CD4-positive, alpha-beta memory T cell (primary cell): ENCODE measurements at regions of chr11 and their contacts with region 1.

Region 1: GRCh38 chr11:4072668-4073285 is 21.8 kb upstream of the RRM1 start:
- DNase-seq: peak; percentile 64 to 77 (median 76)
- H3K4me3 ChIP-seq: no peak overlapping the region
- H3K4me3 Mint-ChIP-seq: no peak overlapping the region
- H3K27ac ChIP-seq: peak overlapping the region; percentile 17
- H3K27ac Mint-ChIP-seq: peak overlapping the region; percentile 33 to 92 (median 88)
- H3K4me1 ChIP-seq: peaks cover 39% of the 10 kb centered on the region
- H3K4me1 Mint-ChIP-seq: peaks cover 40 to 63% (median 49%) of the 10 kb centered on the region in 4 donors
- H3K27me3 ChIP-seq: no peaks in the 10 kb centered on the region
- H3K27me3 Mint-ChIP-seq: no peaks in the 10 kb centered on the region

Region 2: GRCh38 chr11:3781423-3781822 is 291.4 kb before region 1 on chr11:
- CTCF ChIA-PET with region 1: interaction called, 24 read pairs
- POLR2A ChIA-PET with region 1: no interaction called
- intact Hi-C with region 1: no loop called
- DNase-seq: no peak
- H3K4me3 ChIP-seq: no peak overlapping the region
- H3K4me3 Mint-ChIP-seq: no peak overlapping the region
- H3K27ac ChIP-seq: no peak overlapping the region
- H3K27ac Mint-ChIP-seq: peak overlapping the region in 4 of 7 donors; percentile 41 to 81 (median 66)
- H3K4me1 ChIP-seq: peaks cover 47% of the 10 kb centered on the region
- H3K4me1 Mint-ChIP-seq: peaks cover 27 to 48% (median 37%) of the 10 kb centered on the region in 4 donors
- H3K27me3 ChIP-seq: no peaks in the 10 kb centered on the region
- H3K27me3 Mint-ChIP-seq: no peaks in the 10 kb centered on the region

Region 3: GRCh38 chr11:3817181-3817800 is 255.5 kb before region 1 on chr11:
- CTCF ChIA-PET with region 1: interaction called, 41 read pairs
- POLR2A ChIA-PET with region 1: no interaction called
- intact Hi-C with region 1: no loop called
- DNase-seq: no peak
- H3K4me3 ChIP-seq: no peak overlapping the region
- H3K4me3 Mint-ChIP-seq: no peak overlapping the region
- H3K27ac ChIP-seq: no peak overlapping the region
- H3K27ac Mint-ChIP-seq: peak overlapping the region in 1 of 7 donors; percentile 31
- H3K4me1 ChIP-seq: no peaks in the 10 kb centered on the region
- H3K4me1 Mint-ChIP-seq: no peaks in the 10 kb centered on the region
- H3K27me3 ChIP-seq: no peaks in the 10 kb centered on the region
- H3K27me3 Mint-ChIP-seq: no peaks in the 10 kb centered on the region

Region 4: DNA sequence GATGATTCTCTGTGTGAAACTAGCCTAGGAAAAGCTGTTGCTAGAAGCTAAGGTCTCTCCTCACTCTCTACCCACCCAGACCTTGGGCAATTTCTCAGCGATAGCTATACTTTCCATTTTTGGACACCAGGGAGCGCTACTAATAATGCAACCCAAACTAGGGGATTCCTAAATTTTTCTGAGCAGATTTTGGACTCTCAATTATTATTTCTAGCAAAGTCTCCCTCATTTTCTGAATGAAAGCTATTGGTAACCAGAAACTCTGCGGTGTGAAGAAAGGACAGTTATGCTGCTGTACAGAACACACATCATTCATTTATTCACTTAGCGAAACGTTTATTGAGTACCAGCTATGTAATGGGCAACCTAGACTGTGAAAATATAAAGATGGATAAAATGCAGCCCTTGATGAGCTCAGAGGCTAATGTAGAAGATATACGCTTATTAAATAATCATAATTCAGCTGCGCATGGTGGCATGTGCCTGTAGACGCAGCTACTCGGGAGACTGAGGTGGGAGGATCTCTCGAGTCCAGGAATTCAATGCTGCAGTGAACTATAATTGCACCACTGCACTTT is 223.4 kb before region 1 on chr11:
- CTCF ChIA-PET with region 1: interaction called, 934 read pairs
- POLR2A ChIA-PET with region 1: interaction called, 89 read pairs
- intact Hi-C with region 1: loop called (anchors 1 kb)
- DNase-seq: peak; percentile 57 to 70 (median 66)
- H3K4me3 ChIP-seq: no peak overlapping the region
- H3K4me3 Mint-ChIP-seq: peak overlapping the region in 1 of 8 donors; percentile 21
- H3K27ac ChIP-seq: no peak overlapping the region
- H3K27ac Mint-ChIP-seq: peak overlapping the region; percentile 4 to 76 (median 62)
- H3K4me1 ChIP-seq: peaks cover 30% of the 10 kb centered on the region
- H3K4me1 Mint-ChIP-seq: peaks cover 25 to 38% (median 30%) of the 10 kb centered on the region in 4 donors
- H3K27me3 ChIP-seq: no peaks in the 10 kb centered on the region
- H3K27me3 Mint-ChIP-seq: no peaks in the 10 kb centered on the region

Region 5: GRCh38 chr11:3929649-3930048 is 143.1 kb before region 1 on chr11:
- CTCF ChIA-PET with region 1: interaction called, 23 read pairs
- POLR2A ChIA-PET with region 1: no interaction called
- intact Hi-C with region 1: loop called (anchors 1 kb)
- DNase-seq: no peak
- H3K4me3 ChIP-seq: no peak overlapping the region
- H3K4me3 Mint-ChIP-seq: no peak overlapping the region
- H3K27ac ChIP-seq: no peak overlapping the region
- H3K27ac Mint-ChIP-seq: peak overlapping the region in 2 of 7 donors; percentile 37 to 69
- H3K4me1 ChIP-seq: peaks cover 39% of the 10 kb centered on the region
- H3K4me1 Mint-ChIP-seq: peaks cover 41 to 70% (median 48%) of the 10 kb centered on the region in 4 donors
- H3K27me3 ChIP-seq: no peaks in the 10 kb centered on the region
- H3K27me3 Mint-ChIP-seq: no peaks in the 10 kb centered on the region

Region 6: GRCh38 chr11:4025248-4025966 is 47.4 kb before region 1 on chr11:
- CTCF ChIA-PET with region 1: interaction called, 19 read pairs
- POLR2A ChIA-PET with region 1: no interaction called
- intact Hi-C with region 1: no loop called
- DNase-seq: no peak
- H3K4me3 ChIP-seq: no peak overlapping the region
- H3K4me3 Mint-ChIP-seq: no peak overlapping the region
- H3K27ac ChIP-seq: no peak overlapping the region
- H3K27ac Mint-ChIP-seq: peak overlapping the region in 3 of 7 donors; percentile 32 to 54 (median 54)
- H3K4me1 ChIP-seq: peaks cover 1% of the 10 kb centered on the region
- H3K4me1 Mint-ChIP-seq: peaks cover 14 to 29% (median 23%) of the 10 kb centered on the region in 4 donors
- H3K27me3 ChIP-seq: no peaks in the 10 kb centered on the region
- H3K27me3 Mint-ChIP-seq: no peaks in the 10 kb centered on the region

Region 7: DNA sequence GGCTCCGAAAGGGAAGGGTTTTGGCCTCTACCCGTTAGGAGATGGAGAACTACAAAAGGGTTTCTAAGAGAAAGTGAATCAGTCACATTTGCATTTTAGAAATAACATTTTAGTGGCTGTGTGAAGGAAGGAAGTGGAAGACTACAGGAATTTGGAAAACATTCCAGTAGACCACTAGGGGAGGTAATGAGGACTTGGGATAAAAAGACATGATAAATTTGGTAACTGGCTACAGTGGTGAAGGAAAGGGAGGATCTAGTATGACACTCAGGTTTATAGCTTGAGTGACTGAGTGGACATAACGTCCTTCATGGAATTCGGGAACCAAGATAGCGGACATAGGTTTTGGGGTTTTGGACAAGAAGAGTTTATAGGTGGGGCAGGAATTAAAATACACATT is 14.8 kb after region 1 on chr11:
- CTCF ChIA-PET with region 1: interaction called, 58 read pairs
- POLR2A ChIA-PET with region 1: interaction called, 5 read pairs
- intact Hi-C with region 1: no loop called
- DNase-seq: no peak
- H3K4me3 ChIP-seq: no peak overlapping the region
- H3K4me3 Mint-ChIP-seq: peak overlapping the region in 2 of 8 donors; percentile 23 to 36
- H3K27ac ChIP-seq: no peak overlapping the region
- H3K27ac Mint-ChIP-seq: peak overlapping the region; percentile 62 to 99 (median 93)
- H3K4me1 ChIP-seq: peaks cover 57% of the 10 kb centered on the region
- H3K4me1 Mint-ChIP-seq: peaks cover 49 to 74% (median 57%) of the 10 kb centered on the region in 4 donors
- H3K27me3 ChIP-seq: no peaks in the 10 kb centered on the region
- H3K27me3 Mint-ChIP-seq: no peaks in the 10 kb centered on the region